Left colon (tissue), 2 donors: ENCODE measurements at regions of chr6 and their contacts with region 1.

Region 1: DNA sequence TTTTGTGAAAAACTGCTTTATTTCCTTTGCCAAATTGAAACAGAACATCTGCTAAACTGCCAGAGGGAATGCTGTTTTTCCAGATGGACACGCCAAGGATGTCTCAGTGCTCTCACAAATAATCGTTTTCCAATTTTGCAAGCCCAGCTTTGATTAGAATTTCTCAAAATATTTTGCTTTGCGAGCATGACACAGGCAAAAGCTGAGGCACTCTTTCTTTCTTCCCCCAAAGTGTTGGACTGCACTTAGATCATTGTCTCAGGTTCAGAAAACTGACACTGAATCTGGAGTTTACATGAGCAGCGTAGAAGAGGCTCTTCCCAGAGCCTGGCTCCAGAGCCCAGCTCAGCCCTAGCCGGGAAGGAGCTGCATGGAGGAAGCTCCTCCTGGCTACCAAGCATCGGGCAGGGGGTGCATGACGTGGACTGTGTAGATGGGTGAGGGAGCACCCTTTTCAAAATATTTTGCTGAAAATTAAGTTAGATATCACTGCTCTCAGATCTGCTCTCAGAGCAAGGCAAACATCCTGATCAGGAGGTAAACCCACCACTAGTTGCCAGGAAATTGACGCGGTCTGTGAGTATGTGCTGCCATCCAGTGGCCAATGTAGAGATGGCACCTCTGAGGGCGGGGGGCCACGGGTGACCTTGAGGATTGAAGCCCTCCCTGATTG is 107.5 kb downstream of the SLC22A3 start:
- DNase-seq: peak; percentile 42 to 66
- ATAC-seq: peak; percentile 85

Region 2: GRCh38 chr6:159862103-159862502 is 593.6 kb before region 1 on chr6:
- intact Hi-C with region 1: loop called in 1 of 2 experiments (anchors 10 kb)
- DNase-seq: no peak
- ATAC-seq: no peak

Region 3: GRCh38 chr6:160088069-160088783 is 367.5 kb before region 1 on chr6:
- intact Hi-C with region 1: loop called in 1 of 2 experiments (anchors 5 kb)
- DNase-seq: peak; percentile 58 to 81
- ATAC-seq: peak; percentile 40

Region 4: DNA sequence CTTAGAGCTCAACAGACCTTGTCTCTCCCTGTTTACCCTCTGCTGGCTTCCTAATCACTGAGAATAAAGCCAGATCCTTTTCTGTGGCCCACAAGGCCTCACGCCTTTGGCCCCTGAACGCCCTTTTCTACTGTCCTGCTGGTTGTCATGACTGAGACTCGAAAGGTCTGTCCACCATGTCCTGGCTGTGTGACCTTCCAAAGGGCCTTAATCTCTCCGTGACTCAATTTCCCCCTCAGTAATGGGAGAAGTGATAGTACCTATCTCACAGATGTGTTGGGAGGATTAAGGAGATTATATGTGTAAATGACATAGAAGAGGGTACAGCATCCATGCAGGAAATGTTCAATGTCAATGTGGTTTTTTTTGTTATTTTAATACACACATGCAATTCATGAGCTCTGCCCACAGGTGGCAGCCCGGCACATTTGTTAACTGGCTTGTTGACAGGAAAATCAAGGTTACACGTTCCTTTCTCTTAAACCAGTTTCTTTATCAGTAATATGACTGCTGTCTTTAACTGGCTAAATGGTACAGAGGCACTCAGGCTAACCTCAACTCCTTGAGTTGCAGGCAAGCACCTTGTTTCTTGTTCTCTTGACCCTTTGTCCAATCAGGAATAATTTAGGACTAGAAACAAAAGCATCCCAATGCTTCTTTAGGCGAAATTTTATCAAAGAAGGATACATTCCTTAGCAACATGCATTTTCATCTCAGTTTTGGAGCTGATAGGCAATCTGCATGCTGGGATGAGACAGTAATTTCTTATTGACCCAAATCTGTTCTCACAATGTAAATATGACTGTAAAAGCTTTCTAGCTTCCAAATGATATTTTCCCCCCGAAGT is 317.5 kb before region 1 on chr6:
- intact Hi-C with region 1: loop called (anchors 5 kb)
- DNase-seq: peak in 1 of 2 donors; percentile 64
- ATAC-seq: peak; percentile 64